AG04449 (cell line): ENCODE measurements at regions of chr17 and their contacts with region 1.

Region 1: DNA sequence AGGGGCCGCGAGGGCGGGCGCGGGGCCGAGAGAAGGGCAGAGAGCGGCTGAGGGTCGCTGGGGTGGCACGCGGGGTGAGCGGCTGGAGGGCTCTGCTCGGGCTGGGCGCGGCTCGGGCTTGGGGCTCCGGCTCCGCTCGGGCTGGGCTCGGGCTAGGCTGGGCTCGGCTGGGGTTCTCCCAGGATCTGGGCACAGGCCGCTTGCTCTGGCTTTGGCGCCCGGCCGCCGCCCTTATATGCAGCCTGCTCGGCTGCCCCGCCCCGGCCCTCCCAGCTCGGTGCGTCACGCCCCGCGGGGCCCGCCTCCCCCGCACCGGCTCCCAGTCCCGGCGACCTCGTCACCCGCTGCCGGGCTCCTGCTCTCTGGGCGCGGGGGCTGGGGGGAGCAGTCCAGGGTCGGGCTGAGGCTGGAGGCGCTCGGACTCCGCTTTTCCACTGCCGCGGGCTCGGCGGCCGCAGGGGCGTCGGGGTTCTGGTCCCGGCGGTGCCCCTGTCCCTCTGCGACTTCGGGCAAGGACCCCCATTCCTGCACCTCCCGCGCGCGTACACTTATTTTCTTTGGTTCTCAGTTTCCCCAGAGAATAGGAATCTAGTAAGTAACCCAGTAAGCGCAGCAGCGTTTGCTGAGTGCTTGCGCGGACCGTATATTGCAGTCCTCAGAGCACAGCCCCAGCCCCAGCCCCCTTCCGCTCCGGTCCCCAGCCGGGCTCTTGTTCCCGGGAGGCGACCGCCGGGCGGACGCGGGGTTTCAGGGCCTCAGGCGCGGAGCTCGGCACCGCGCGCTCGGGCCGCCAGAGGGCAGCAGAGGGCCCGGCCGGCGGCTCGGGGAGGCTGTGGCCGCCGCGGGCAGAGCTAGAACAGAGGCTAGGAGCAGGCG is at the start of gene RASD1:
- DNase-seq: no peak
- H3K4me3 ChIP-seq: peak within 1 kb of the TSS; percentile 59
- CTCF ChIP-seq: peak; percentile 79

Region 2: DNA sequence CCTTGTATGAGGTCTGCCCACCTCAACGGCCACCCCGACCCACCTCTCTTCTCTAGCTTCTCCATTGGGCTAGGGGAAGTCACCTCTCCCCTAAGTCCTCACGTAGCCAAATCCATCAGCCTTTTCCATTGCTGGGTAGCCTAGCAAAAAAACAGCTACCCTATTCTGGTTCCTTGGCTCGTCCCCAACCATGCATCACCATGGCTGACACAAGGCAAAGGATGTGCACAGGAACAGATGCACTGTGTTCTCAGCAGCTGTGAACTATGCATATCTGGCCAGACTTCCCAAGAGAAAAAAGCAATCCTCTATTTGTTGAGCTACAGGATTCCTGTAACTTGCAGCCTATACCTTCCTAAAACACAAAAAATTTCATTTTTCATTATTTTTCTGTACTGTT is 237.4 kb before region 1 on chr17:
- CTCF ChIA-PET with region 1: no interaction called
- POLR2A ChIA-PET with region 1: no interaction called
- DNase-seq: no peak
- H3K4me3 ChIP-seq: no peak overlapping the region
- CTCF ChIP-seq: no peak

Region 3: DNA sequence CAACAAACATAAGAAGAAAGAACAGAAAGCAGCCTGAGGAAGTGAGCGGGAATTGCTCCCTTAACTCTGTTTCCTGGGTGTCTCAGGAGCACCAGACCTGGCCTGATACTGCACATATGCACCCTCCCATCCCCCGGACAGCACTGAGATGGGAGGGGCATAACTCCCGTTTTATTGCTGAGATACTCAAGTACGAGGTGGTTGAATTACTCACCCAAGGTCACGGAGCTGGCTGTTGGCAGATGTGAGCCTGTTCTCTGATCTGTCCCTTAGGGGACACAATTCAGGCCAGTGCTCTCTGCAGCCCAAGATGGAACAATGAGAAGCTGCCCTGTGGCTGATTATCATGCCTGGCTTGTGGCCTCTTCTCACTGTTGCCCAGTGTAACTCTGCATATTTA is 28.7 kb before region 1 on chr17:
- CTCF ChIA-PET with region 1: interaction called, 11 read pairs
- POLR2A ChIA-PET with region 1: interaction called, 3 read pairs
- DNase-seq: no peak
- H3K4me3 ChIP-seq: no peak overlapping the region
- CTCF ChIP-seq: no peak

Region 4: GRCh38 chr17:17511881-17512858 is 15.7 kb after region 1 on chr17:
- CTCF ChIA-PET with region 1: interaction called, 56 read pairs
- POLR2A ChIA-PET with region 1: interaction called, 20 read pairs
- DNase-seq: peak; percentile 75
- H3K4me3 ChIP-seq: no peak overlapping the region
- CTCF ChIP-seq: peak; percentile 10

Region 5: GRCh38 chr17:17545031-17545820 is 48.8 kb after region 1 on chr17:
- CTCF ChIA-PET with region 1: interaction called, 16 read pairs
- POLR2A ChIA-PET with region 1: no interaction called
- DNase-seq: no peak
- H3K4me3 ChIP-seq: no peak overlapping the region
- CTCF ChIP-seq: no peak

Region 6: DNA sequence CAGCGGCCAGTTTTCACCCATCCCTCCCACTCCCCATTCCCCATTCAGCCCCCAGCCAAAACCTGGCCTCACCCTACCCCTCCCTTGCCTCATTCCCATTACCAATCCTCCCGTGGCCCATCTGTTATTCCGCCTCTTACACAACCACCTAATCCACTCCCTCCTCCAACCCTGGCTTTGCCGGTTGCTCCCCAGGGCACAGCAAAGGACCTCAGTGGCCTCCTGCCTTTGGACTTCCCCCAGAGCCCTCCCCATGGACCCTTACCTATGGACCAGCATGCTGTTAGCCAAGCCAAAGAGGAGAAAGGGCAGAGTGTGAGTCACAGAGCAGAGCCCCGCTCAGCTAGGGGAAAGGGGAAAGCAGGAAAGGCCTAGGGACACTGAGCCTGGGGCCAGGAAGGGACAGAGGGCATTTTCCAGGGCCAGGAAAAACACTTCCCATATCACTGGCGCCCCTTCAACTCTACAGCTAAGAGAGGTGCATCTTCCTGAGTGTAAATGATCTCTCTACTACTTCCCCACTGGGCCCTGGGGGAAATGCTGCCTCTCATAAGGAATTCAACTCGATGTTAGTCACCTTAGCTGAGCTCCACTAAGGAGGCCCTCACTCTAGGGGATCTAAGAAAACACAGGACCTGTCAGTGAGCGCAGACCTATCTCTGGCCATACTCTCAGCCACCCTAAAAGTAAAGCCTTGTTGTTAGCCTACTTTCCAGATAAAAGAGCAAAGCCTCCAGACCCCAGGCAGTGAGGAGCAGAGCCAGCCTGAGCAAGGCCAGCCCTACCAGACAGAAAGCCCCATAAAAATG is 84.4 kb after region 1 on chr17:
- CTCF ChIA-PET with region 1: interaction called, 23 read pairs
- POLR2A ChIA-PET with region 1: no interaction called
- DNase-seq: no peak
- H3K4me3 ChIP-seq: no peak overlapping the region
- CTCF ChIP-seq: no peak

Region 7: DNA sequence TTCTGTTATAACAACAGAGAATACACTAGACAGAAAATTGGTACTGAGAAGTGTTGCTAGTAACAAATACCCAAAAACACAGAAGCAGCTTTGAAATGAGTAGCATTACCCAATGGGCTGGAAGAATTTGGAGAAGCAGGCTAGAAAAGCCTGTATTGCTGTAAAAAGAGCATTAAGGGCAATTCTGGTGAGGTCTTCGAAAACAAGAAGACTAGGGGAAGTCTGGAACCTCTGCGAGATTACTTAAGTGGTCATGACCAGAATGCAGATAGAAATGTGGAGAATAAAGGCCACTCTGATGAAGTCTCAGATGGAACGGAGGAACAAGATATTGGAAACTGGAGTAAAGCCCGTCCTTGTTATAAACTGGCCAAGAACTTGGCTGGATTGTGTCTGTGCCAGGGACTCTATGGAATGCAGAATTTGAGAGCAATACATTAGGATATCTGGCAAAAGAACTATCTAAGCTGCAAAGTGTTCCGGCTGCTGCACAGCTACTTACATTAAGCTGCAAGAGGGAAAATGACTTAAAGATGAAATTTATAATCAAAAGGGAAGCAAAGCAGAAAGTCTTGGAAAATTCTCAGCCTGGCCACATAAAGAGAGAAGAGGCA is 140.0 kb after region 1 on chr17:
- CTCF ChIA-PET with region 1: interaction called, 67 read pairs
- POLR2A ChIA-PET with region 1: no interaction called
- DNase-seq: no peak
- H3K4me3 ChIP-seq: no peak overlapping the region
- CTCF ChIP-seq: no peak